ENCODE measurements at regions of chr12 and their contacts with region 1.

Region 1: DNA sequence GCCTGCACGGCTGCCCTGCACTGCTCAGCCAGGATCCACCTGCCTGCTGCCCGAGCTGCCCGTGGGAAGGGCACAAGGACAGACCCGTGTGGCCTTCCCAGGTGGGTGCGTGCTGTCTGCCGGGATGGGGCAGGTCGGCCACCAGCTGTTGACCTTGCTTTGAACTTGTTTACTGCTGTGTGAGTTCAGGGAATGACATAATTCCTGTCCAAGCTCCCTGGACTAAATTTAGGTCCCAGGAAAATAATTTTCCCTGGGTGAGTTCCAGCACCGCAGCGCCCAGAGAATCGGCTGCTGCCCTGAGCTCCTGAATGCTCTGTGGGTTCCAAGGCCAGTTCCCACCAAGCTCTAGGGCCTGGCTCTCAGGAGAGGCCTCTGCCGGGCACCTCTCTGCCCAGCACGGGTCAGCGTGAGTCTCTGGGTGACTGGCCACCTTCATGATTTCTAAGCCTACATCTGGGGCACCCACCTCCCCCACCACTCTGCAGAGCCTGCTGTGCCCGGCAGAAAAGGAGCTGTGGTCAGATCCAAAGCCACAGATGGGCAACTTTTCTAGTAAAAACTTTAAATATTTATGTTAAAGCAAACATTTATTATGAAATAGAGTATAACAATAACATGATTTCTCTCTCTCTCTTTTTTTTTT is 27.2 kb upstream of the MLXIP start:
- DNase-seq: no peak
- H3K4me3 ChIP-seq: no peak overlapping the region
- H3K27ac ChIP-seq: peak overlapping the region in 1 of 2 donors; percentile 23
- H3K4me1 ChIP-seq: peaks cover 15% of the 10 kb centered on the region
- H3K27me3 ChIP-seq: no peaks in the 10 kb centered on the region
- CTCF ChIP-seq: no peak
- POLR2A ChIP-seq: no peak

Region 2: DNA sequence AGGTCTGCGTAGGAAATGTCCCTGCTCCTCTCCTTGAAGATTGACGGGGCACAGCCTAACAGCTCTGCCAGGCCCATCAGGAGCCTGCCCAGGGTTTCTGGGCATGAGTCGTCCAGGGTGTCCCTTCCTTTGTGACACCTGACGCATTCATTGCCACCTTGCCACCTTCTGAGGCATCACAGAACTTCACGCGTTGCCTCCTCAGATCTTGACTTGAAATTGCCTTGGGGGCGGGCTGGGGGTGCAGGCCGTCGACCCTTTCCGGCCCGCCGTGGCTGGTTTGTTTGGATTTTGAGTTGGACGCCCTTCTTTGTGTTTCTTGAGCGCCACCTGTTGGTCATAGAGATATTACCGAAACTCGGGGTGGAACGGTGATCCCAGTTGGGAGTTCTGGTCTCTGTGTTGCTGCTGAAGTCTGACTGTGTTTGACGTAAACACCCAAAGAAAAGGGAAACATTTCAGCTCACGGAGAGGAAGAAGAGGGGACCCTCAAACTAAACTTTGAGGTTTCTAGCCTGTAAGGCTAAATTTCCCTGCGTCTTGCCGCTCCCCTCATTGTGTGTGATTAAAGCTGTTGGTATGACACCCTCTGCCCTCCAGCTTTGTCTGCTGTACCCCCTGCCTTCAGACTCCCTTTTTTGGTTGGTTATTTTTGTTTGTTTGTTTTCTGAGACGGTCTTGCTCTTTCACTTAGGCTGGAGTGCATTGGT is 71.9 kb after region 1 on chr12:
- intact Hi-C with region 1: loop called (anchors 5 kb)
- DNase-seq: peak; percentile 79
- H3K4me3 ChIP-seq: no peak overlapping the region
- H3K27ac ChIP-seq: no peak overlapping the region
- H3K4me1 ChIP-seq: no peaks in the 10 kb centered on the region
- H3K27me3 ChIP-seq: no peaks in the 10 kb centered on the region
- CTCF ChIP-seq: peak; percentile 70 to 79 (median 74)
- POLR2A ChIP-seq: no peak

Region 3: GRCh38 chr12:122427412-122427811 is 376.1 kb after region 1 on chr12:
- intact Hi-C with region 1: no loop called
- DNase-seq: no peak
- H3K4me3 ChIP-seq: no peak overlapping the region
- H3K27ac ChIP-seq: no peak overlapping the region
- H3K4me1 ChIP-seq: peaks cover 12% of the 10 kb centered on the region
- H3K27me3 ChIP-seq: no peaks in the 10 kb centered on the region
- CTCF ChIP-seq: no peak
- POLR2A ChIP-seq: no peak